ENCODE measurements at regions of chr6 and their contacts with region 1.

Region 1: DNA sequence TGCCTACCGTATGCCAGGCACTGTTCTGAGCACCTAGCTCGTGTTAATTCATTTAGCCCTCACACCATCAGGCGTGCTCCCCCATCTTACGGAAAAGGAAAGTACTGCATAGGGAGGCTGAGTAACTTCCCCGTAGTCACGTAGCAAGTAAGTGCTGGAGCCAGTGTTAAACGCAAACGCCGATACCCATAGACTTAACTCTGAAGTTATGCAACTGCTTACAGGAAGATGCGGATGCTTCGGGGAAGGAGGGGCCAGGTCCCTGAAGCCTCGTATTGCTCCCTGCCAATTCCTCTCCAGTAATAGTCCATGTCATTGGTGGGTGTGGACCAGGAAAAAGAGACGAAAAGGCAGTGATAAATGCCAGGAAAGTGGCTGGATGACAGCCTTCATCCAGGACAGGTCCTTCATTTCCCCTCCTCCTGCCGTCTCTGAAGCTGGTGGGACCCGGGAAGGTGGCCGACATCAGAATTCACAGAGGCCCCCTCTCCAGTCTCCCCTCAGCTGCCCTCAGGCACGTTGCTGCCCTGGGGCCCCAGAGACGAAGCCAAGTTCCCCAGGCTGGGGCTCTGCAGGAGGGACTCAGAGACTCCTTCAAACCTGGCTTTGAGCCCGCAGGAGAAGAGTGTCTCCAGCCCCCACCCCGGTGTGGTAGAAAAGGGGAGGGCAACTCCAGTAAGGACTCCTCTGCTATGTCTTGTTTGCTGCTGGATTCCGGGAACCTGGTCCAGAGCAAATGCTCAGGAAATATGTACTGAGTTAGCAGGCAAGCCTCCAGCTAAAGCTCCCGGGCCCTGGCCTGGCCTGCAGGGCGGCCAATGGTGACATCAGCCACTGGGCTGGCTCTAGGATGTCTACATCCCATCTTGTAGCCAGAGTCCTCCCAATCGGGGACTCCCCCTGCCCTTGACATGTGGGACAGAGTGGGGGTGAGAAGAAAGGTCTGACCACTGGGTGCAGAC is 37.8 kb downstream of the RAB44 start:
- DNase-seq: peak; percentile 55
- H3K4me3 Mint-ChIP-seq: peak overlapping the region; percentile 31
- H3K27ac Mint-ChIP-seq: peak overlapping the region; percentile 50
- H3K4me1 Mint-ChIP-seq: peaks cover 11% of the 10 kb centered on the region
- H3K27me3 Mint-ChIP-seq: no peaks in the 10 kb centered on the region

Region 2: DNA sequence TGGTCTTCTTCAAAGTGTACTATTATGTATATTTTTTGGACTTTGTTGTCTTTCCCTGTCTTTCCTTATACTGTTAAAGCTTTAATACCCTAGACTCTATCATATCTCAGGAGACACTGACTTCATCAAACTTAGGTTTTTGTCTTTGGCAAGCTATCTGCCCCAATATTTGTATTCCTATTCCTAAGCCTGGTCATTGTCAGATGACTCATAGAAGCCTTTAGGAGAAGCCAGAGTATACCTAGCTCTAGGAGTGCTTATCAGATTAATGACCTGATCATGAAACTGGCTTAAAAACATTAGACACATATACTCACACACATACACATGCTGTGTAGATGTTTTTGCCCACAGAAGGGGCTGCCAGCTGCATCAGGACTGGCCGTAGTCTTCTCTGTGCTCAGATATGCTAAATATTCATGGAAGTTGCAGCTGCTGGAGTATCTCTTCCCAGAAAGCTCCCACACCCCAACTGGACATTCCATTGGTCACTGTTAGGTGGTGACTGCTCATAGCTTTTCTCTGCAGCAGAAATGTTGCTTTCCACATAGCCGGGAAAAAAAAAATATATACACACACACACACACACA is 1744.3 kb before region 1 on chr6:
- CTCF ChIA-PET with region 1: no interaction called
- POLR2A ChIA-PET with region 1: no interaction called
- intact Hi-C with region 1: no loop called
- DNase-seq: no peak
- H3K4me3 Mint-ChIP-seq: no peak overlapping the region
- H3K27ac Mint-ChIP-seq: no peak overlapping the region
- H3K4me1 Mint-ChIP-seq: no peaks in the 10 kb centered on the region
- H3K27me3 Mint-ChIP-seq: no peaks in the 10 kb centered on the region

Region 3: DNA sequence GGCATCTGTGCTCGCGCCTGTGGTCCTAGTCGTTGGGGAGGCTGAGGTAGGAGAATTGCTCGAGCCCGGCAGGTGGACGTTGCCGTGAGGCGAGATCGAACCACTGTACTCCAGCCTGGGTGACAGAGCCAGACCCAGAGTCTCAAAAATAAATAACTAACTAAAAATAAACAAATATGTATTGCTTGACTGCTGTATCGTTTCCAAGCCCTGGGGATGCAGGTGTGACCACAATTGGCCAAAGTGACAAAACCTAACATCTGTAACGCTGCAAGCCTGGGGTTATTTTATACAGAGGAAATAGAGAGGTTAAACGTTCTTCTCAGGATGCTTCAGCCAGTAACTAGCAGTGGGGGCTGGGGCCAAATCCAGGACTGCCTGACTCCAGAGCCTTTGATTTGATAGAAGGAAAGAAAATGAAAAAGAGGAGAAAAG is 143.2 kb before region 1 on chr6:
- CTCF ChIA-PET with region 1: no interaction called
- POLR2A ChIA-PET with region 1: no interaction called
- intact Hi-C with region 1: no loop called
- DNase-seq: no peak
- H3K4me3 Mint-ChIP-seq: peak overlapping the region; percentile 47
- H3K27ac Mint-ChIP-seq: peak overlapping the region; percentile 83
- H3K4me1 Mint-ChIP-seq: peaks cover 13% of the 10 kb centered on the region
- H3K27me3 Mint-ChIP-seq: peaks cover 2% of the 10 kb centered on the region

Region 4: DNA sequence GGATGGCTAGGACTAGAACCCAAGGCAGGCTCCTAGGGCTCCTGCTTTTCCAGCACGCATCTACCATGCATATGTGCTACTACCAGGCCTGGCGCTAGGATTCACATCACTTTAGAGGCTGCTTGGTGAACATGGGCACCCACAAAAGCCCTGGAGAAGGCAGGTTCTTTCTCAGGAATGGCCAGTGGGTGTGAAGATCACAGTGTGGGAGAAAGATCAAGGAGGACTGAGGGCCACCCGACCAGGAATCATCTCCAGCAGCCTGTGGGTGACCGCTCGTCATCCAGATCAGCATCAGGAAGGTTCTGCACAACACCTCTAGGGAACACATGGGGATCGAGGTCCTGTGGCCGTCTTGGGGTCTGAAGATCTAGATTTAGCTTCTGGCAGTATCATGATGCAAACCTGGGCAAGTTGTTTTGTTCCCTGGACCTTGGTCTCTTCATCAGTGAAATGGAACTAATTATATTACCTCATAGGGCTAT is 114.0 kb before region 1 on chr6:
- CTCF ChIA-PET with region 1: no interaction called
- POLR2A ChIA-PET with region 1: no interaction called
- intact Hi-C with region 1: no loop called
- DNase-seq: no peak
- H3K4me3 Mint-ChIP-seq: no peak overlapping the region
- H3K27ac Mint-ChIP-seq: no peak overlapping the region
- H3K4me1 Mint-ChIP-seq: peaks cover 12% of the 10 kb centered on the region
- H3K27me3 Mint-ChIP-seq: no peaks in the 10 kb centered on the region

Region 5: GRCh38 chr6:36701401-36701991 is 33.9 kb before region 1 on chr6:
- CTCF ChIA-PET with region 1: no interaction called
- POLR2A ChIA-PET with region 1: no interaction called
- intact Hi-C with region 1: no loop called
- DNase-seq: no peak
- H3K4me3 Mint-ChIP-seq: no peak overlapping the region
- H3K27ac Mint-ChIP-seq: no peak overlapping the region
- H3K4me1 Mint-ChIP-seq: peaks cover 7% of the 10 kb centered on the region
- H3K27me3 Mint-ChIP-seq: no peaks in the 10 kb centered on the region

Region 6: DNA sequence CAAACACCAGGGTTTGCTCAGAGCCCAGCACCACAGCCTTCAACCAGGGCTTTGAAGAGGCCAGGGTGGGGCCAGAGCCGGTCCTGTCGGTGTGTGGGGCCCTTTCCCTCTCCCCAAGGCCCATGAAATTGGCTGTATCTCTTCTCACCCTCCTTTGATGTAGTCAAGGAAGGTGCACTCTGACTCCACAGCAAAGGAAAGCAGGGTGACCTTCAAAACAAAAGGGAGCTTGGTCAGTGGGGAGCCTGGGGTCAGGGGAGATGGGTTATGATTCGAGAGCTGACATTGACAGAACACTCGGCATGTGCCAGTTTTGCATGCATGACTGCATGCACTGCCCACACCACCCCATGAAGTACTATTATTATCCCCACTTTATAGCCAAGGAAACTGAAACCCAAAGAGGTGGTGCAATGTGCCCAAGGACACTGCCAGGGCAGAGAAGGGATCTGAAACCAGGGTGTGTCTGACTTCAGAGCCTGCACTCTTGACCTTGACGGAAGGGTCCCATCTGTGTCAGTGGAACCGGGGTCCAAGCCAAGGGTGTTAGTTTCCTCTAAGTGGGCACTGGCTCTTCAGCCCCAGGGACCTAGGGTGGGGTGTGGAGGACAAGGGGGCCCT is 17.6 kb after region 1 on chr6:
- CTCF ChIA-PET with region 1: interaction called, 19 read pairs
- POLR2A ChIA-PET with region 1: no interaction called
- intact Hi-C with region 1: loop called (anchors 2 kb)
- DNase-seq: no peak
- H3K4me3 Mint-ChIP-seq: no peak overlapping the region
- H3K27ac Mint-ChIP-seq: peak overlapping the region; percentile 21
- H3K4me1 Mint-ChIP-seq: peaks cover 59% of the 10 kb centered on the region
- H3K27me3 Mint-ChIP-seq: no peaks in the 10 kb centered on the region